Naive thymus-derived CD8-positive, alpha-beta T cell (primary cell): ENCODE measurements at regions of chr14 and their contacts with region 1.

Region 1: DNA sequence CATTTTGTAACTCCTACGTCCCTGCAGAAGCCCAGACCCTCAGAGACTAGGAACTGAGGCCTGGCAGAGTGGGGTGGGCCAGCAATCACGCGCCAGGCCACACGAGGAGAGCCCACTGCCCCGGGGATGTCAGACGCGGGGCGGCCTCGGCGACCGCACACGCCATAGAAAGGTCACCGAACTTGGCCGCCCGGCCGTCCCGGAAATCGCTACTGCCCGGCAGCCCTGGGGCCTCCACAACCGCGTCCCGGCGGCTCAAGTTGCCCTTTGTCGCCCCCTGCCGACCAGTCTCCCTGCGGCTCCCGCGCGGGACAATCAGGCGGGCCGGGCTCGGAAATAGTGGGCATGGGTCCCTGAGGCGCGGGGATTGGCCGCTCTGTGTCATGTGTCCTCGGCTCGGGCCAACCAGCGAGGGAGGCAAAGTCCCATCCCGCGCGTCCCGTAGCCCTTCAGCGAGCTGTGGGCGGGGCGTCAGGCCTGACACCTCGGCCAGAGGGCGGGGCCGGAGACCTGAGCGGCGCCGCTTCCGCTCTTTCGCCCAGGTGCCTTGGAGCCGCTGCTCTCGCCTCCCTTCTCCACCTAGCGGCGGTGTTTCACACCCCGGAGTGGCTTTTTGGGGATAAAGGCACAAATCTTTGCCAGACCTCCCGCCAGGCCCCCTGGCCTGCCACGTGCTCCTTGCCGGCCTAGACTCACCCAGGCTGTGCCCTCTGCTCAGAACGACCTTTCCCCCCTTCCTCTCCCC is 33.4 kb upstream of the DEGS2 start:
- DNase-seq: peak; percentile 98 to 100 (median 100)
- ATAC-seq: peak; percentile 99
- H3K4me3 Mint-ChIP-seq: peak overlapping the region; percentile 26 to 80 (median 68)
- H3K27ac Mint-ChIP-seq: peak overlapping the region; percentile 85 to 97 (median 94)
- H3K4me1 Mint-ChIP-seq: peaks cover 8 to 14% (median 11%) of the 10 kb centered on the region in 4 donors
- H3K27me3 Mint-ChIP-seq: no peaks in the 10 kb centered on the region

Region 2: GRCh38 chr14:99982537-99983250 is 210.2 kb before region 1 on chr14:
- POLR2A ChIA-PET with region 1: interaction called, 16 read pairs
- DNase-seq: peak; percentile 50 to 78 (median 65)
- ATAC-seq: peak; percentile 95 to 99
- H3K4me3 Mint-ChIP-seq: no peak overlapping the region
- H3K27ac Mint-ChIP-seq: peak overlapping the region in 4 of 10 donors; percentile 6 to 57 (median 34)
- H3K4me1 Mint-ChIP-seq: peaks cover 0 to 14% (median 12%) of the 10 kb centered on the region in 4 donors
- H3K27me3 Mint-ChIP-seq: no peaks in the 10 kb centered on the region

Region 3: DNA sequence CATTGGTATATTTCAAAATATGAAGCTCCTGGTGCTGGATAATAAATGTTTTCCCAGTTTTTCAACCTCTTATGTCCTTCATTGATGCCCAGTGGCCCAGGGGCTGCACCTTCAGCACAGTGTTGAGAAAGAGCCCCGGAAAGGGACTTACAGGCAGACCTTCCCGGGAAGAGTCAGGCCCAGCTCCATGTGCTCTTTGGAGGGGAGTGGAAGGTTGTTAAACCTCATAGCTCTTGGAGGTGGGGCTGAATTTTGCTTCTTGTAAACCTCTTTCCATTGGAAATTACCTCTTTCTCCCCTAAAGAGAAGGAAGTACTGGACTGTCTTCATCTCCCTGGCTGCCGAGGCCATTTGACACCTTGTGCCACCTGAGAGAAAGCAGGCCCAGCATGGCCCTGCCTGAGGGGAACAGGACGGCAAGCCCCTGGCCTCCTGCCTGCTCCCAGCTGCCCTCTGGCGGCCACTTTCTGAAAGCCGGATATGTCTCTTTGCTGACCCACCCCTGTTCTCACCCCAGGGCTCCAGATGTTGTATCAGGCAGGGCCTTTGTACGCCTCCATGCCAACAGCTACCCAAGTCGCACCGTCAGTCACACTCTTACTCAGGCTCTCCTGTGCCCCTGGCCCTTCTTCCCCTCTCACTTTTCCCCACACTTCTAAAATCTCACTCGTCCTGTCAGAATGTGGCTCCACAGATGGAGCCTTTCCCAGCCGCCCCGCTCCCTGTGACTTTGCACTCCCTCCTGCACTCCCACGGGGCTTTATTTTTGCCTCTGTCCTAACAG is 84.6 kb before region 1 on chr14:
- POLR2A ChIA-PET with region 1: interaction called, 11 read pairs
- DNase-seq: peak; percentile 80 to 93 (median 88)
- ATAC-seq: peak; percentile 64 to 69
- H3K4me3 Mint-ChIP-seq: peak overlapping the region in 9 of 10 donors; percentile 50 to 83 (median 74)
- H3K27ac Mint-ChIP-seq: peak overlapping the region; percentile 94 to 98 (median 96)
- H3K4me1 Mint-ChIP-seq: peaks cover 68 to 90% (median 86%) of the 10 kb centered on the region in 4 donors
- H3K27me3 Mint-ChIP-seq: no peaks in the 10 kb centered on the region

Region 4: GRCh38 chr14:100213956-100214774 is 21.3 kb after region 1 on chr14:
- POLR2A ChIA-PET with region 1: interaction called, 18 read pairs
- DNase-seq: peak; percentile 81 to 98 (median 90)
- ATAC-seq: peak; percentile 90 to 93
- H3K4me3 Mint-ChIP-seq: peak overlapping the region; percentile 77 to 87 (median 85)
- H3K27ac Mint-ChIP-seq: peak overlapping the region; percentile 85 to 97 (median 94)
- H3K4me1 Mint-ChIP-seq: peaks cover 16 to 44% (median 34%) of the 10 kb centered on the region in 4 donors
- H3K27me3 Mint-ChIP-seq: no peaks in the 10 kb centered on the region

Region 5: DNA sequence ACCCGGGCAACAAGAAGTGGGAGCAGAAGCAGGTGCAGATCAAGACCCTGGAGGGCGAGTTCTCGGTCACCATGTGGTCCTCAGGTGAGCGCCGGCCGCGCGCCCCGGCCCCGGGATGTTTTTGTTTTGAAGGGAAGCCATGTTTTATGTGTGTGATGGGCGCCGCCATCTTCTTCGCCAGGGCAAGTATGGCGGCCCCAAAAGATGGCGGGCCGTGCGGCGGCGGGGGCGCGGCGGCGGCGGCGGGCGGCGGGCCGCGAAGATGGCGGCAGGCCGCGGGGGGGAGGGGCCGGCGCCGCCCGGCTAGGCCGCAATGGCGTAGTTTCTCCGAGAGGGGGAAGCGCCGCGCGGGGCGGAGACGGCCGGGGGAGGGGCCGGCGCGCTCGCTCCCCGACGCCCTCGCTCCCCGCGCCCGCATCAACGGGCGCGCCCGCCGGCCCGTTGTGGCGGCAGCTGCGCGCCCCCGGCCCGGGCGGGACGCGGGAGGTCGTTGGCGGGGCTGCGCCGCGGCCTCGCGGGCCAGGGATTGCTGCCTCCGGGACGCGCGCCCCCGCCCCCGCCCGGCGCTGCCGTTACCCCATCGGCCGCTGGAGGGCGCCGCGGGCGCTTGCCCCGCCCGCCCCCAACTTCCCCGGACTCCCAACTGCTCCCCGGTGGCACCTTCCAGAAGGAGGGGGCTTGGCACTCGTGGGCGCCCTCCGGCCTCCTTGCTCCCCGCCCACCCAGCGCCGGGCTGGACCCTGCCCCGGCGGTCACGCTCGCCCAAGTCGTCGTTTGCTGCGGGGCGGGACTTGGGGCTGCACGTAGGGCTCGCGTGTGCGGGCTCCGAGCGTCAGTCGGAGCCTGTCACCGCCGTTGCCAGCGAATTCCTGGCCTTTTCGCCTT is 47.2 kb after region 1 on chr14:
- POLR2A ChIA-PET with region 1: interaction called, 17 read pairs
- DNase-seq: peak; percentile 76 to 90 (median 84)
- ATAC-seq: peak; percentile 51
- H3K4me3 Mint-ChIP-seq: peak overlapping the region; percentile 83 to 96 (median 92)
- H3K27ac Mint-ChIP-seq: peak overlapping the region; percentile 91 to 97 (median 96)
- H3K4me1 Mint-ChIP-seq: peaks cover 35 to 69% (median 60%) of the 10 kb centered on the region in 4 donors
- H3K27me3 Mint-ChIP-seq: no peaks in the 10 kb centered on the region